ENCODE measurements at regions of chr17 and their contacts with region 1.

Region 1: DNA sequence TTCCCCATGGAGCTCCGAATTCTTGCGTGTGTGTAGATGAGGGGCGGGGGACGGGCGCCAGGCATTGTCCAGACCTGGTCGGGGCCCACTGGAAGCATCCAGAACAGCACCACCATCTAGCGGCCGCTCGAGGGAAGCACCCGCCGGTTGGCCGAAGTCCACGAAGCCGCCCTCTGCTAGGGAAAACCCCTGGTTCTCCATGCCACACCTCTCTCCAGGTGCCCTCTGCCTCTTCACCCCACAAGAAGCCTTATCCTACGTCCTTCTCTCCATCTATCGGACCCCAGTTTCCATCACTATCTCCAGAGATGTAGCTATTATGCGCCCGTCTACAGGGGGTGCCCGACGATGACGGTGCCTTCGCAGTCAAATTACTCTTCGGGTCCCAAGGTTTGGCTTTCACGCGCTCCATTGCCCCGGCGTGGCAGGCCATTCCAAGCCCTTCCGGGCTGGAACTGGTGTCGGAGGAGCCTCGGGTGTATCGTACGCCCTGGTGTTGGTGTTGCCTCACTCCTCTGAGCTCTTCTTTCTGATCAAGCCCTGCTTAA is 617 bp upstream of the SENP3 start:
- DNase-seq: peak; percentile 60 to 86 (median 71)
- ATAC-seq: peak; percentile 76
- H3K4me3 ChIP-seq: peak overlapping the region; percentile 96
- H3K4me3 Mint-ChIP-seq: peak overlapping the region; percentile 87 to 97 (median 93)
- H3K27ac ChIP-seq: peak overlapping the region; percentile 92
- H3K27ac Mint-ChIP-seq: peak overlapping the region; percentile 90 to 100 (median 96)
- H3K4me1 ChIP-seq: peaks cover 17 to 54% of the 10 kb centered on the region in 2 donors
- H3K4me1 Mint-ChIP-seq: peaks cover 33 to 55% (median 49%) of the 10 kb centered on the region in 7 donors
- H3K27me3 ChIP-seq: no peaks in the 10 kb centered on the region
- H3K27me3 Mint-ChIP-seq: peaks cover 0 to 2% (median 0%) of the 10 kb centered on the region in 5 donors

Region 2: GRCh38 chr17:7306911-7307686 is 254.0 kb before region 1 on chr17 and contains the start of gene EIF5A:
- CTCF ChIA-PET with region 1: interaction called, 3 read pairs
- POLR2A ChIA-PET with region 1: no interaction called
- intact Hi-C with region 1: loop called in 1 of 2 experiments (anchors 1 kb)
- DNase-seq: peak; percentile 99 to 100 (median 100)
- ATAC-seq: peak; percentile 79
- H3K4me3 ChIP-seq: peak within 1 kb of the TSS; percentile 78
- H3K4me3 Mint-ChIP-seq: peak within 1 kb of the TSS; percentile 90 to 99 (median 95)
- H3K27ac ChIP-seq: peak within 1 kb of the TSS; percentile 100
- H3K27ac Mint-ChIP-seq: peak within 1 kb of the TSS; percentile 98 to 100 (median 99)
- H3K4me1 ChIP-seq: peaks cover 19 to 20% of the 10 kb centered on the region in 2 donors
- H3K4me1 Mint-ChIP-seq: peaks cover 28 to 44% (median 35%) of the 10 kb centered on the region in 7 donors
- H3K27me3 ChIP-seq: no peaks in the 10 kb centered on the region
- H3K27me3 Mint-ChIP-seq: peaks cover 0 to 9% (median 0%) of the 10 kb centered on the region in 5 donors
- total RNA-seq, gene EIF5A: 237 to 666 (median 453) TPM

Region 3: DNA sequence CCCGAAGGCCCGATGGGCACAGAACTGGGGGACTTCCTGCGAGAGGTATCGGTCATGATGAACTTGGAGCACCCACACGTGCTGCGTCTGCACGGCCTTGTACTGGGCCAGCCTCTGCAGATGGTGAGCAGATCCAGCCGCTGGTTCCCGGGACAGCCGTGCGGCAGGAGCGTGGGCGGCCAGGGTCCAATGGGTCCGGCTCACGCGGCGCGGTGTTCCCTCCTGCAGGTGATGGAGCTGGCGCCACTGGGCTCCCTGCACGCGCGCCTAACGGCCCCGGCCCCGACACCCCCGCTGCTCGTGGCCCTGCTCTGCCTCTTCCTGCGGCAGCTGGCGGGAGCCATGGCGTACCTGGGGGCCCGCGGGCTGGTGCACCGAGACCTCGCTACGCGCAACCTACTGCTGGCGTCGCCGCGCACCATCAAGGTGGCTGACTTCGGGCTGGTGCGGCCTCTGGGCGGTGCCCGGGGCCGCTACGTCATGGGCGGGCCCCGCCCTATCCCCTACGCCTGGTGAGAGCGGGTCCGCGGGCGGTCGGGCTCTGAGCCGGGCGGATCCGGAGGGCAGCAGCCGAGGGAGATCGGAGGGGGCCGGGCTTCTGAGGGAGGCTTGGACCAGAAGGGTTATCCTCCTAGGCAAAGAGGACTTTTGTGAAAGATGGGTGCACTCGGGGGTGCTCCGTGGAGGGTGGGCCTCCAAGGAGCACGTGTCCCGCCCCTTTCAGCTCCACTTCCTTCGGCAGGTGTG is 177.2 kb before region 1 on chr17:
- CTCF ChIA-PET with region 1: interaction called, 3 read pairs
- POLR2A ChIA-PET with region 1: no interaction called
- intact Hi-C with region 1: loop called in 1 of 2 experiments (anchors 1 kb)
- DNase-seq: peak; percentile 74 to 88 (median 86)
- ATAC-seq: peak; percentile 98
- H3K4me3 ChIP-seq: peak overlapping the region; percentile 82
- H3K4me3 Mint-ChIP-seq: peak overlapping the region; percentile 74 to 89 (median 82)
- H3K27ac ChIP-seq: peak overlapping the region; percentile 94
- H3K27ac Mint-ChIP-seq: peak overlapping the region; percentile 73 to 96 (median 94)
- H3K4me1 ChIP-seq: peaks cover 10 to 13% of the 10 kb centered on the region in 2 donors
- H3K4me1 Mint-ChIP-seq: peaks cover 10 to 23% (median 15%) of the 10 kb centered on the region in 7 donors
- H3K27me3 ChIP-seq: peaks cover 0 to 11% of the 10 kb centered on the region in 2 donors
- H3K27me3 Mint-ChIP-seq: peaks cover 27 to 37% (median 33%) of the 10 kb centered on the region in 5 donors

Region 4: GRCh38 chr17:7478276-7479153 is 82.6 kb before region 1 on chr17:
- CTCF ChIA-PET with region 1: interaction called, 4 read pairs
- POLR2A ChIA-PET with region 1: interaction called, 23 read pairs
- intact Hi-C with region 1: loop called in 1 of 2 experiments (anchors 1 kb)
- DNase-seq: peak; percentile 53 to 83 (median 73)
- ATAC-seq: peak; percentile 56
- H3K4me3 ChIP-seq: peak overlapping the region; percentile 75
- H3K4me3 Mint-ChIP-seq: peak overlapping the region; percentile 90 to 99 (median 97)
- H3K27ac ChIP-seq: peak overlapping the region; percentile 100
- H3K27ac Mint-ChIP-seq: peak overlapping the region; percentile 90 to 99 (median 95)
- H3K4me1 ChIP-seq: peaks cover 26 to 49% of the 10 kb centered on the region in 2 donors
- H3K4me1 Mint-ChIP-seq: peaks cover 51 to 82% (median 70%) of the 10 kb centered on the region in 7 donors
- H3K27me3 ChIP-seq: no peaks in the 10 kb centered on the region
- H3K27me3 Mint-ChIP-seq: no peaks in the 10 kb centered on the region

Region 5: GRCh38 chr17:7548585-7549400 is 12.3 kb before region 1 on chr17 and contains the start of gene TNFSF12:
- CTCF ChIA-PET with region 1: interaction called, 14 read pairs
- POLR2A ChIA-PET with region 1: interaction called, 25 read pairs
- intact Hi-C with region 1: loop called (anchors 1 kb)
- DNase-seq: peak in 7 of 9 donors; percentile 38 to 69 (median 45)
- ATAC-seq: peak; percentile 60
- H3K4me3 ChIP-seq: peak within 1 kb of the TSS; percentile 91
- H3K4me3 Mint-ChIP-seq: peak within 1 kb of the TSS; percentile 77 to 99 (median 91)
- H3K27ac ChIP-seq: peak within 1 kb of the TSS; percentile 70
- H3K27ac Mint-ChIP-seq: peak within 1 kb of the TSS; percentile 90 to 98 (median 94)
- H3K4me1 ChIP-seq: peaks cover 14 to 35% of the 10 kb centered on the region in 2 donors
- H3K4me1 Mint-ChIP-seq: peaks cover 46 to 60% (median 55%) of the 10 kb centered on the region in 7 donors
- H3K27me3 ChIP-seq: no peaks in the 10 kb centered on the region
- H3K27me3 Mint-ChIP-seq: peaks cover 0 to 2% (median 0%) of the 10 kb centered on the region in 5 donors
- total RNA-seq, gene TNFSF12: 27.3 to 82.4 (median 36.9) TPM

Region 6: GRCh38 chr17:7614422-7615264 is 53.5 kb after region 1 on chr17 and contains the start of gene FXR2:
- CTCF ChIA-PET with region 1: no interaction called
- POLR2A ChIA-PET with region 1: interaction called, 12 read pairs
- intact Hi-C with region 1: loop called in 1 of 2 experiments (anchors 1 kb)
- DNase-seq: peak; percentile 96 to 100 (median 99)
- ATAC-seq: peak; percentile 93
- H3K4me3 ChIP-seq: peak within 1 kb of the TSS; percentile 86
- H3K4me3 Mint-ChIP-seq: peak within 1 kb of the TSS; percentile 85 to 97 (median 92)
- H3K27ac ChIP-seq: peak within 1 kb of the TSS; percentile 81
- H3K27ac Mint-ChIP-seq: peak within 1 kb of the TSS; percentile 89 to 99 (median 97)
- H3K4me1 ChIP-seq: peaks cover 16 to 27% of the 10 kb centered on the region in 2 donors
- H3K4me1 Mint-ChIP-seq: peaks cover 29 to 47% (median 40%) of the 10 kb centered on the region in 7 donors
- H3K27me3 ChIP-seq: no peaks in the 10 kb centered on the region
- H3K27me3 Mint-ChIP-seq: peaks cover 0 to 6% (median 0%) of the 10 kb centered on the region in 5 donors
- total RNA-seq, gene FXR2: 24.6 to 46.9 (median 34.0) TPM